Activated CD8-positive, alpha-beta T cell treated with anti-CD3 and anti-CD28 coated beads, Interleukin-2, amount 10 ng/mL, durations not matched to agents 7 days and 5 days (primary cell): ENCODE measurements at regions of chr17 and their contacts with region 1.

Region 1: GRCh38 chr17:1896243-1897104 is 66.7 kb downstream of the RPA1 start:
- DNase-seq: no peak
- ATAC-seq: no peak
- H3K4me3 Mint-ChIP-seq: no peak overlapping the region
- H3K27ac Mint-ChIP-seq: no peak overlapping the region
- H3K4me1 Mint-ChIP-seq: peaks cover 2% of the 10 kb centered on the region
- H3K27me3 Mint-ChIP-seq: no peaks in the 10 kb centered on the region

Region 2: GRCh38 chr17:1871756-1872155 is 24.7 kb before region 1 on chr17:
- CTCF ChIA-PET with region 1: no interaction called
- POLR2A ChIA-PET with region 1: no interaction called
- DNase-seq: peak; percentile 39
- ATAC-seq: peak; percentile 68
- H3K4me3 Mint-ChIP-seq: peak overlapping the region; percentile 58
- H3K27ac Mint-ChIP-seq: peak overlapping the region; percentile 90
- H3K4me1 Mint-ChIP-seq: peaks cover 60% of the 10 kb centered on the region
- H3K27me3 Mint-ChIP-seq: no peaks in the 10 kb centered on the region

Region 3: GRCh38 chr17:1882836-1883235 is 13.6 kb before region 1 on chr17:
- CTCF ChIA-PET with region 1: interaction called, 13 read pairs
- POLR2A ChIA-PET with region 1: interaction called, 3 read pairs
- DNase-seq: peak; percentile 50
- ATAC-seq: peak; percentile 65
- H3K4me3 Mint-ChIP-seq: no peak overlapping the region
- H3K27ac Mint-ChIP-seq: no peak overlapping the region
- H3K4me1 Mint-ChIP-seq: no peaks in the 10 kb centered on the region
- H3K27me3 Mint-ChIP-seq: no peaks in the 10 kb centered on the region

Region 4: GRCh38 chr17:1920948-1921351 is 24.5 kb after region 1 on chr17:
- CTCF ChIA-PET with region 1: no interaction called
- POLR2A ChIA-PET with region 1: no interaction called
- DNase-seq: no peak
- ATAC-seq: no peak
- H3K4me3 Mint-ChIP-seq: no peak overlapping the region
- H3K27ac Mint-ChIP-seq: no peak overlapping the region
- H3K4me1 Mint-ChIP-seq: no peaks in the 10 kb centered on the region
- H3K27me3 Mint-ChIP-seq: peaks cover 2% of the 10 kb centered on the region